ENCODE measurements at regions of chr10 and their contacts with region 1.

Region 1: DNA sequence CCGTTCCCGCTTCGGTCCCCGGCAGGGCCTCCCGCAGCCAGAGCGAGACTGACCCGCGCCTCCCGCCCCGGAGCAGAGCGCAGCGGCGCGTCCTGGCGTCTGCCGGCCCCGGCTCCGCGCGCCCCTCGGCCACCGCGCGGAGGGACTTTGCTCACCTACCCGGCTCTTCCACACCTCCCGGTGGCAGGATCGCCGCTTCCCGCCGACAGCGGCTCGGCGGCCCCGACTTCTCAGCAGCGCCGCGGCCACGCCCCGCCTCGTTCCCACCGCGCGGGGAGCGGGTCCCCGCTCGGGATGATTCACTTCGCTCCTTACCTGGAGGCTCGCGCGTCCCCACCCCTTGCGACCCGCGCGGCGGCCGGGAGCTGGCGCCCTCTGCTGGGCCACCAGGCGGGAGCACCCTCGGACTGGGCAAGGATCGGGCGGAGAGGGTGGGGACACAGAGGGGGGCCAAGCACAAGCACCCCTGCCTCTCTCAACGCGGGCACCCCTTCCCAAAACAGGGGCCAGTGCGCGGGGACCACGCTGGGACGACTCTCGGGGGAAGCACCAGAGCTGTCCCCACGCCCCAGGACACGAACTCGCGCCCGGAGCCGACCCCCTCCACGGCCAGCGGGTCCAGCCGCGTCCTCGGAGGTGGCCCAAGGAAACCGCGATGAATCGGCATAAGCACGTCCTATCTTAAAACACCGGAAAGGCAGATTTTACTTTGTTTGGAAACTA is 101.0 kb upstream of the SVIL start:
- DNase-seq: peak; percentile 89
- H3K4me3 ChIP-seq: peak overlapping the region; percentile 69 to 88 (median 82)
- H3K27ac ChIP-seq: peak overlapping the region; percentile 82
- H3K4me1 ChIP-seq: peaks cover 15% of the 10 kb centered on the region
- H3K27me3 ChIP-seq: no peaks in the 10 kb centered on the region
- CTCF ChIP-seq: peak; percentile 90 to 92
- POLR2A ChIP-seq: peak; percentile 20

Region 2: GRCh38 chr10:29590915-29591650 is 144.7 kb before region 1 on chr10:
- CTCF ChIA-PET with region 1: interaction called, 3 read pairs
- POLR2A ChIA-PET with region 1: no interaction called
- dilution Hi-C with region 1: no loop called
- intact Hi-C with region 1: loop called (anchors 1 kb)
- DNase-seq: no peak
- H3K4me3 ChIP-seq: no peak overlapping the region
- H3K27ac ChIP-seq: no peak overlapping the region
- H3K4me1 ChIP-seq: peaks cover 23% of the 10 kb centered on the region
- H3K27me3 ChIP-seq: no peaks in the 10 kb centered on the region
- CTCF ChIP-seq: no peak
- POLR2A ChIP-seq: no peak

Region 3: GRCh38 chr10:29691564-29692072 is 44.1 kb before region 1 on chr10:
- CTCF ChIA-PET with region 1: interaction called, 8 read pairs
- POLR2A ChIA-PET with region 1: no interaction called
- dilution Hi-C with region 1: no loop called
- intact Hi-C with region 1: loop called (anchors 1 kb)
- DNase-seq: peak; percentile 97
- H3K4me3 ChIP-seq: peak overlapping the region in 1 of 3 experiments; percentile 57
- H3K27ac ChIP-seq: peak overlapping the region; percentile 100
- H3K4me1 ChIP-seq: peaks cover 49% of the 10 kb centered on the region
- H3K27me3 ChIP-seq: no peaks in the 10 kb centered on the region
- CTCF ChIP-seq: no peak
- POLR2A ChIP-seq: peak; percentile 28

Region 4: GRCh38 chr10:29804025-29804852 is 68.5 kb after region 1 on chr10:
- CTCF ChIA-PET with region 1: interaction called, 11 read pairs
- POLR2A ChIA-PET with region 1: no interaction called
- dilution Hi-C with region 1: no loop called
- intact Hi-C with region 1: loop called (anchors 1 kb)
- DNase-seq: peak; percentile 99
- H3K4me3 ChIP-seq: peak overlapping the region in 1 of 3 experiments; percentile 31
- H3K27ac ChIP-seq: peak overlapping the region; percentile 99
- H3K4me1 ChIP-seq: peaks cover 54% of the 10 kb centered on the region
- H3K27me3 ChIP-seq: no peaks in the 10 kb centered on the region
- CTCF ChIP-seq: no peak
- POLR2A ChIP-seq: no peak

Region 5: DNA sequence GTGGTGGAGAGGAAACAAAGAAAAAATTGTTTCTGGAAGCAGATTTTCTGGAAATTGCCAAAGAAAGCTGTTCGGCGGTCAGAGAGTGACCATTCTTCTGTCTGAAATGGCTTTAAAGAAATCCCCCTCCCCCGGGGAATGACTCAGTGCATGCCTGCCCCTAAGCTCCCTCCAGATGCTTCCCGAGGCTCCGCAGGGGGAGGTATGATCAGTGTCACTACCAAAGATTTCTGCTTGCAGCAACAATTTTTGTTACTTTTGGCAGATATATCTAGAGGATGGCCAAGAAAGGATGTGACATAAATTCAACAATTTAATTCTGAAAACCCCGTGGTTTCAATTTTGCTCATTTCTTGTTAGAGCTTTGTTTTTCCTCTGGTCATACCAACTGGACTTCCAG is 159.7 kb after region 1 on chr10:
- CTCF ChIA-PET with region 1: interaction called, 13 read pairs
- POLR2A ChIA-PET with region 1: no interaction called
- dilution Hi-C with region 1: no loop called
- intact Hi-C with region 1: no loop called
- DNase-seq: peak; percentile 98
- H3K4me3 ChIP-seq: peak overlapping the region in 1 of 3 experiments; percentile 19
- H3K27ac ChIP-seq: peak overlapping the region; percentile 83
- H3K4me1 ChIP-seq: peaks cover 14% of the 10 kb centered on the region
- H3K27me3 ChIP-seq: no peaks in the 10 kb centered on the region
- CTCF ChIP-seq: no peak
- POLR2A ChIP-seq: peak; percentile 35

Measured in endothelial cell of umbilical vein (primary cell).